MCF 10A (cell line): ENCODE measurements at regions of chr22 and their contacts with region 1.

Region 1: GRCh38 chr22:37817705-37818408 is 5.3 kb upstream of the GALR3 start:
- DNase-seq: peak; percentile 71
- H3K4me3 Mint-ChIP-seq: no peak overlapping the region
- H3K27ac Mint-ChIP-seq: no peak overlapping the region
- H3K4me1 Mint-ChIP-seq: peaks cover 6% of the 10 kb centered on the region
- H3K27me3 Mint-ChIP-seq: no peaks in the 10 kb centered on the region
- CTCF ChIP-seq: peak; percentile 92

Region 2: DNA sequence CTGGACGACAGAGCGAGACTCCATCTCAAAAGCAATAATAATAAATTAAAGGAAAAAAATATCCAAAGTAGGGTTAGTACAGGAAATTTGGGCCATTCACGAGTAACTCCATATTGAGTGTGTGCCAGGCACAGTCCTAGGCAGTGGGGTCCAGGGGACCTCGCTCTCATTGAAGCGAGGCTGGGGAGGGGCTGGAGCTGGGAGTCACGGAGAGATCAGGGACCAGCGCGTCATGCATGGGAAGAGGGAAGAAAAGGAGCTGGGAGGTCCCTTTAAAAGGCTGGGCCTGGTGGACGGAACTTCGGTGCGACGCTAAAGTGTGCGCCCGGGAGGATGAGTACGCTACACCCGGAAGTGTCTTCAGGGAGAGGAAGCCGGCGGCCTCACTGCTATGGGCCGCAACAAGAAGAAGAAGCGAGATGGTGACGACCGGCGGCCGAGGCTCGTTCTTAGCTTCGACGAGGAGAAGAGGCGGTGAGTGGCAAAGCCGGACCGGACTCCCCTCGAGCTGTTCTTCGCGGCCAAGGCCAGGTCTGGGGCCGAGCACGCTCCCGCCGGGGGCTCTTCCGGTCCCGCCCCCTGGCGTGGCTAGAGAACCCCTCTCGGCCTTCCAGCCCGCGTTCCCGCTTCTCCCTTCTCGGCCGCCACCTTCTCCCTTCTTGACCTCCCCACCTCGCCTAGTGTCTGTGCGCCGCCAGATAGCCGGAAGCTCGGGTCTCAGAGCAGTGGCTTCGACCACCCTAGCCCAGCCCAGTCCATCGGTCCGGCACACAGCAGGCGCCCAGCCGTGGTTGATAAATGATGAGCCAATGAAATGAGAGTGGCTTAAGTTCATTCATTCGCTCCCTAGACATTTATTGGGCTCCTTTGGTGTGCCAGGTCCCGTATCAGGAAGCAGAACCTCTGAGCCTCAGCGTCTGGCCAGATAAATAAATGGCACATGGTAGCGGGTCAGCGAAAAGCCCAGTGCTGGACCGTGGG is 131.6 kb before region 1 on chr22 and contains the start of gene NOL12:
- CTCF ChIA-PET with region 1: no interaction called
- POLR2A ChIA-PET with region 1: no interaction called
- intact Hi-C with region 1: no loop called
- DNase-seq: peak; percentile 90
- H3K4me3 Mint-ChIP-seq: peak within 1 kb of the TSS; percentile 96
- H3K27ac Mint-ChIP-seq: peak within 1 kb of the TSS; percentile 96
- H3K4me1 Mint-ChIP-seq: peaks cover 30% of the 10 kb centered on the region
- H3K27me3 Mint-ChIP-seq: no peaks in the 10 kb centered on the region
- CTCF ChIP-seq: no peak
- total RNA-seq, gene NOL12: 47.1 and 50.8 TPM in 2 replicates

Region 3: DNA sequence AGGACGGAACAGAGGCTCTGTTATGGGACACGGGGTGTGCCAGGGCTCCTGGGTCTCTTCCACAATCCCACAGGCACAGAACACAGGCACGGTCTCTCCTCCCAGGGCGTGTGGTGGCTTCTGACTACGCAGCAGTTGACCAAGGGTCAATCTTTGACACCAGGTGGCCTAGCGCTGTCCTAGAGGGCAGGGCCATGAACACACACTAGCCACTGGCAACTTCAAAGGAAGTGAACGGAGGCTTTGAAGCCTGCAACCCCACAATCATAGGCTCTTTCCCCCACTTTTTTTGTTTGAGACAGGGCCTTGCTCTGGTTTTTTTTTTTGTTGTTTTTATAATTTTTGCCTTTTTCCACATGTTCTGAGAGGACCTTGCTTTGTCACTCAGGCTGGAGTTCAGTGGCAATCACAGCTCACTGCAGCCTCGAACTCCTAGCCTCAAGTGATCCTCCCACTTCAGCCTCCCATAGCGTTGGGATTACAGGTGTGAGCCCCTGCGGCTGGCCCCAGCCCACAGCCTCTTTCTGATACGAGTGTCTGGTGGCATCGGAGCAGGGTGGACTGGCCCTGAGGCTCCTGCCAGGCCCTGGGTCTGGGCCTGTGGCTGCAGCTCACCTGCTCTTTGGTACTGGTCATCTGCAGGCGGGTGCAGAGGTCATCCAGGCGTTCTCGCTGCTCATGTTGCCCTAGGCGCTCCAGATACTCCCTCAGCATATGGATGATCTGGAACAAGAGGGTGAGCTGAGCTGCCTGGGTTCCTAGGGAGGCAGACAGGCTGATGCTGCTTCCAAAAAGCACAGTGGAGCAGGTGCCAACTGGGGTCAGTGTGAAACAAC is 14.4 kb after region 1 on chr22:
- CTCF ChIA-PET with region 1: interaction called, 27 read pairs
- POLR2A ChIA-PET with region 1: no interaction called
- intact Hi-C with region 1: no loop called
- DNase-seq: no peak
- H3K4me3 Mint-ChIP-seq: no peak overlapping the region
- H3K27ac Mint-ChIP-seq: no peak overlapping the region
- H3K4me1 Mint-ChIP-seq: no peaks in the 10 kb centered on the region
- H3K27me3 Mint-ChIP-seq: no peaks in the 10 kb centered on the region
- CTCF ChIP-seq: no peak

Region 4: GRCh38 chr22:37920126-37920525 is 102.3 kb after region 1 on chr22:
- CTCF ChIA-PET with region 1: no interaction called
- POLR2A ChIA-PET with region 1: no interaction called
- intact Hi-C with region 1: no loop called
- DNase-seq: no peak
- H3K4me3 Mint-ChIP-seq: no peak overlapping the region
- H3K27ac Mint-ChIP-seq: peak overlapping the region; percentile 80
- H3K4me1 Mint-ChIP-seq: no peaks in the 10 kb centered on the region
- H3K27me3 Mint-ChIP-seq: no peaks in the 10 kb centered on the region
- CTCF ChIP-seq: no peak

Region 5: DNA sequence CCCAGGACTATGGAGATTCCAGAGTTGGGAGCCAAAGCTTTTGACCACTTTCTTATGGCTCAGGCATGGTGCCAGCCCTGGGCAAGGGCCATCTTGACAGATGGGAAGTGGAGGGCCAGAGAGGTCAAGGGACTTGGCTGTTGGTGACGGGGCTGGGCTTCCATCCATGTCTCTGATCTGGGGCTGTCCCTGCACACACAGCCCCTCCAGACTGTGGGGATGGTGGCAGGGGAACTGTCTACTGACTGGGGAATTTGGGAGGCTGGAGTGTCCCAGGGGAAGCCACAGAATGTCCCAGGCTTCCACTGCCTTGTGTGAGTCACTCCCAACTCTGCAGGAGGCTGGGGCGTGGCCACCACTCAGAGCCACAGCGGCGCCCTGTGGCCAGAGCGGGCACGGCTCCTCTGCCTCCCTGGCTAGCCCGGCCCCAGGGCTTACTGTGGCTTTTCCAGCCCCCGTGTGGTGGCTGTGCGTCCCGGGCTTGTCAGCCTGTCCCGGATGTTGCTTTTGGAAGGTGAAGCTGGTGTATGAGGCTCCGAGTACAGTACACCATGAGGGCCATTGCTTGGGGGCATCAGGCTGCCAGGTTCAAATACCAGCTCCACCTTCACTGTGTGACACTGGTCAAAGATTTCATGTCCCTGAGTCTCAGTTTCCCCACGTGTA is 116.0 kb after region 1 on chr22:
- CTCF ChIA-PET with region 1: interaction called, 10 read pairs
- POLR2A ChIA-PET with region 1: no interaction called
- intact Hi-C with region 1: loop called (anchors 1 kb)
- DNase-seq: peak; percentile 95
- H3K4me3 Mint-ChIP-seq: peak overlapping the region; percentile 16
- H3K27ac Mint-ChIP-seq: no peak overlapping the region
- H3K4me1 Mint-ChIP-seq: peaks cover 17% of the 10 kb centered on the region
- H3K27me3 Mint-ChIP-seq: no peaks in the 10 kb centered on the region
- CTCF ChIP-seq: peak; percentile 90